ENCODE measurements at regions of chr1 and their contacts with region 1.

Region 1: DNA sequence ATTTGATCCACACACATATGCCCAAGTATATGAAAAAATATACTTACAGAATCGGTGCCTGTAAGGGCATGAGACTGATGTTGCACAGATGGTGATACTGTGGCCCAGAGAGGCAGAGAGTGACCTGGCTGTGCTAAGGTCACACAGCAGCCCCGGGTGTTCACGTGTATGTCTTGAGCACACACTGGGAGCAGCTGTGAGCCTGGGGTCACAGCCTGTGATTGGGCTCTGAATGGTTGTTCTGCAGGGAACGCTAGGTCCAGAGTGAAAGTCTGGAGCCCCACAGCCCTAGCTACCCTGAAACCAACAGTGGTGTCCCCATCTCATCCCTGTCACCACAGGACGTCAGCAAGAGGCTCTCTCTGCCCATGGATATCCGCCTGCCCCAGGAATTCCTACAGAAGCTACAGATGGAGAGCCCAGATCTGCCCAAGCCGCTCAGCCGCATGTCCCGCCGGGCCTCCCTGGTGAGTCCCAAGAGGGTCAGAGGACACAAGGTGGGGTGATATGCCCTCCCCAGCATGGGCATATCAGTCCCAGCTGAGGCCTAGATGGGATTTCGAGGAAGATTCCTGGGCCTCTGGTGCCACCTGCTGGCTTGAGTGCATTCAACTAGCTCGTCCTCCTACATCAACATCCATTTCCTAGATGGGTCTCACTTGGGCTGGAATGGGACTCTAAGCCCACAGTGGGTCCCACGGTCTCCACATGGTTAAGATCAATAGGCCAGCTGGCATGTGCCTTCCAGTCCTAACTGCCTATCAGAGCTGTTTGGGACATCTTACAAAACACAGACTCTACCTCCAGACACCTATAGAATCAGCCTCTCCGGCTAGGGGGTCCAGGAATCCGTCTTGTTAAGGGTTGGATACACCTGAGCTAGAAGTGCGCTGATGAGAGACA is 19.7 kb downstream of the CDK18 start:
- DNase-seq: no peak
- H3K4me3 ChIP-seq: no peak overlapping the region
- CTCF ChIP-seq: peak; percentile 82

Region 2: GRCh38 chr1:205321164-205321958 is 202.8 kb before region 1 on chr1 and contains the start of gene NUAK2:
- CTCF ChIA-PET with region 1: interaction called, 52 read pairs
- POLR2A ChIA-PET with region 1: no interaction called
- DNase-seq: no peak
- H3K4me3 ChIP-seq: peak within 1 kb of the TSS; percentile 98
- CTCF ChIP-seq: peak; percentile 48

Region 3: DNA sequence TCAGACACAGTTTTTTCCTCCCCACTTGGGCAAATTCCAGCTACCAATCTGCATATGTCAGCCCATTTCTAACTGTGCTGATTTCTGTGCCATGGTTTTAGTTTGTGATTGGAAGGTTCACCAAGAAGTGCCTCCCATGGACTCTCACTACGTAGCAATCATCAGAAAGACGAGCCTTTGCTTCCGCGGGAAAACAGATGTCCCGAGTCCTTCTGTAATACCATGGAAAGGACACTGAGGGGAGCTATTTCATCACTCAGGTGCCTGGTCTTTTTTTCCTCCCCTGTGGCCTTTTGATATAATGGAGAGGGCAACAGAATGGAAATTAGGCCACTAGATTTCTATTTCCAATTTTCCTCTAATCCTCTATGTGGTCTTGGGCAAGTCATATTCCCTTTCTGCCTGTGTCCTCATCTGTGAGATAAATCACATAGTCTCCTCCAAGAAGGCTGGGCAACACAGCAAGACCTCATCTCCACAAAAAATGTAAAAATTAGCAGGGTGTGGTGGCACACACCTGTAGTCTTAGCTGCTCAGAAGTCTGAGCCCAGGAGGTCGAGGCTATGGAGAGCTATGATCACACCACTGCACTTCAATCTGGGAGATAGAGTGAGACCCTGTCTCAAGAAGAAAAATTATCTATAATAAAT is 127.0 kb before region 1 on chr1:
- CTCF ChIA-PET with region 1: interaction called, 102 read pairs
- POLR2A ChIA-PET with region 1: no interaction called
- DNase-seq: no peak
- H3K4me3 ChIP-seq: no peak overlapping the region
- CTCF ChIP-seq: peak; percentile 35

Region 4: GRCh38 chr1:205477759-205478247 is 46.3 kb before region 1 on chr1:
- CTCF ChIA-PET with region 1: interaction called, 709 read pairs
- POLR2A ChIA-PET with region 1: no interaction called
- DNase-seq: peak; percentile 36
- H3K4me3 ChIP-seq: no peak overlapping the region
- CTCF ChIP-seq: no peak

Region 5: DNA sequence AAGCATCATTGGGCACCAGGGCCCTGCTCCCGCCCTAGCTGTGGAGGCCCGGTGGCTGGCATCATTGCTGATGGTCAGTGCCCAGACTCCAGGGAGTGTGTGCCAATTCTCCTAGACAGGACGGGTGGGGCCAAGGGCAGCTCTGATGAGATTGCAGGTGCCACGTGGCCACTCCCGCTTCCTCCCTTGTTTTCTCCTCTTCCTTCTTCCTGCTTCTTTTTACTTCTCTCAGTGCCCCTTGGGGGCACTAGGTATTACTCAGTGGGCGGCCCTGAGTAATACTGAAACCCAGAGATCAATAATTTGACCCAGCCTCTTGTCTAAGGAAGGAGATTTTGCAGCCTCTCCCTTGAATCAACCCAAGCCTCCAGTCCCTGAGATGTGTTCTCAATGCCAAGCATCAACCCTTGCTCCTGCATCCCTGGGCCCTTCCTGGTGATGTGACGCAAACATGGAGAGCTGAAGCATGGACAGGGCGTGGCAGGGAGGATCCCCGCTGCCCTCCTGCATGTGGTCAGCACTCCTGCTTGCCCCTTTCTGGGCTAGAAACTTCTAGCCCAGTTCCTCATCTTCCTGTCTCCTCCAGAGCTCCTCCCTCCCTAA is 12.7 kb after region 1 on chr1:
- CTCF ChIA-PET with region 1: interaction called, 53 read pairs
- POLR2A ChIA-PET with region 1: interaction called, 3 read pairs
- DNase-seq: no peak
- H3K4me3 ChIP-seq: no peak overlapping the region
- CTCF ChIP-seq: no peak

Measured in AG04449 (cell line).